B cell (primary cell): ENCODE measurements at regions of chr3 and their contacts with region 1.

Region 1: DNA sequence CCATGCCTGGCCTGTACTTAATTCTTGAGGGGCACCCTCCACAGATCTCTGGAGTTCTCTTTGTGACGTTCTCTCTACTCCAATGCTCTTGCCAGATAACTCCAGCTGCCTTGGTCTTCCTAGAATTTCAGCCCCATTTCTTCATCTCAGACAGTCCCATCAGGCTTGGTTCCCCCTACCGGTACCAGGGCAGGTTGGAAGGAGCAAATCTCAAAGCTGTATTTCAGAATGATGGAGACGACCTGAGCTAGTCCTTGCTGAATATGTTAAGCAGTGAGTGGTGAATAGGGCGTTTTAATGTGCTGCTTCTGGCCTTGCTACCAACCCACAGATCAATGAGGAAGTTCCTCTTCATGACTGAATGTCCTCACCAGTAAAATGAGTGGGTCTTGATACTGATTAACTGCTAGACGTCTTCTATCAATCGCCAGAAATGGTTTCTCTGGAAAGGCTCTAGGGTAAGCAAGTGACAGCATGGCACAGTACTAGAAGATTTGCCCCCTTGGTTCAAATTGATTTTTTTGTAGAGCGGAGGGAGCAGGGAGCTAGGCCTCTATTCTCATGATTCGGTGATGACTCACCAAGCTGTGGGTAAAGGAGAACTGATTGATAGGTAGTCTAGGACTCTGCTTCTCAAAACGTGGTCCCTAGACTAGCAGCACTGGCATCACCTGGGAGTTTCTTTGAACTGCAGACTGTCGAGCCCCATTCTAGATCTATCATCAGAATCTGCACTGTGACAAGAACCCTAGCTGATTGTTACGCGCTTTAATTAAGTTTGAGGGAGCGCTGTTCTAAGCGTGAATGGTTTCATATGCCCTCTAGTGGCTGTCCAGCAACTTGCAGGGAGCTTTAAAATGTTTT is 67.8 kb downstream of the UBP1 start:
- DNase-seq: peak; percentile 68
- ATAC-seq: peak; percentile 49
- H3K4me3 ChIP-seq: no peak overlapping the region
- H3K4me3 Mint-ChIP-seq: no peak overlapping the region
- H3K27ac ChIP-seq: no peak overlapping the region
- H3K27ac Mint-ChIP-seq: no peak overlapping the region
- H3K4me1 ChIP-seq: peaks cover 4 to 6% of the 10 kb centered on the region in 2 donors
- H3K4me1 Mint-ChIP-seq: peaks cover 3% of the 10 kb centered on the region
- H3K27me3 ChIP-seq: peaks cover 0 to 5% (median 1%) of the 10 kb centered on the region in 4 experiments
- H3K27me3 Mint-ChIP-seq: peaks cover 20% of the 10 kb centered on the region
- CTCF ChIP-seq: peak; percentile 93

Region 2: GRCh38 chr3:32401556-32402081 is 970.8 kb before region 1 on chr3:
- CTCF ChIA-PET with region 1: no interaction called
- POLR2A ChIA-PET with region 1: no interaction called
- intact Hi-C with region 1: no loop called
- DNase-seq: peak; percentile 80
- ATAC-seq: peak; percentile 70
- H3K4me3 ChIP-seq: peak overlapping the region; percentile 33 to 75 (median 55)
- H3K4me3 Mint-ChIP-seq: peak overlapping the region; percentile 88
- H3K27ac ChIP-seq: peak overlapping the region; percentile 88 to 94
- H3K27ac Mint-ChIP-seq: peak overlapping the region; percentile 96
- H3K4me1 ChIP-seq: peaks cover 41 to 58% of the 10 kb centered on the region in 2 donors
- H3K4me1 Mint-ChIP-seq: peaks cover 76% of the 10 kb centered on the region
- H3K27me3 ChIP-seq: no peaks in the 10 kb centered on the region
- H3K27me3 Mint-ChIP-seq: no peaks in the 10 kb centered on the region
- CTCF ChIP-seq: no peak

Region 3: GRCh38 chr3:32947789-32948238 is 424.6 kb before region 1 on chr3:
- CTCF ChIA-PET with region 1: interaction called, 85 read pairs
- POLR2A ChIA-PET with region 1: no interaction called
- intact Hi-C with region 1: no loop called
- DNase-seq: peak; percentile 88
- ATAC-seq: peak; percentile 83
- H3K4me3 ChIP-seq: no peak overlapping the region
- H3K4me3 Mint-ChIP-seq: no peak overlapping the region
- H3K27ac ChIP-seq: no peak overlapping the region
- H3K27ac Mint-ChIP-seq: no peak overlapping the region
- H3K4me1 ChIP-seq: peaks cover 0 to 18% of the 10 kb centered on the region in 2 donors
- H3K4me1 Mint-ChIP-seq: peaks cover 13% of the 10 kb centered on the region
- H3K27me3 ChIP-seq: no peaks in the 10 kb centered on the region
- H3K27me3 Mint-ChIP-seq: no peaks in the 10 kb centered on the region
- CTCF ChIP-seq: peak; percentile 87

Region 4: DNA sequence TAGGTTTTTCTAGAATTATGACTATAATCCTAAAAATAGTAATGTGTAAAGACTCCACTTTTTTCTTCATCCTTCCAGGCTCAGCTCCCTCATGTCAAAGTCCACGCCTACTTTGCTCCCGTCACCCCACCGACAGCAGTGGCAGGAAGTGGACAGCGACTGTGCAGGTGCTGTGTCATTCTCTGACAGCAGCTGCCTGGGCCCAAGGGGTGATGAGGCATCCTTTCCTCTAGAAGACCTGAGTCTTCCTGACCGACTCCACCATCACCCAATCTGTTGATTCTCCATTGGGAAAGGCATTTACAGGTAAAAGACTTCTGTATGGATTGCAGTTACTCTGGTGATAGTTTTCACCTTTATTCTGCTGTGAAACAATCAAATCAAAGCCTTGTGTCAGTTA is 13.0 kb after region 1 on chr3:
- CTCF ChIA-PET with region 1: interaction called, 22 read pairs
- POLR2A ChIA-PET with region 1: no interaction called
- intact Hi-C with region 1: no loop called
- DNase-seq: no peak
- ATAC-seq: no peak
- H3K4me3 ChIP-seq: no peak overlapping the region
- H3K4me3 Mint-ChIP-seq: no peak overlapping the region
- H3K27ac ChIP-seq: no peak overlapping the region
- H3K27ac Mint-ChIP-seq: no peak overlapping the region
- H3K4me1 ChIP-seq: no peaks in the 10 kb centered on the region
- H3K4me1 Mint-ChIP-seq: no peaks in the 10 kb centered on the region
- H3K27me3 ChIP-seq: no peaks in the 10 kb centered on the region
- H3K27me3 Mint-ChIP-seq: no peaks in the 10 kb centered on the region
- CTCF ChIP-seq: no peak

Region 5: DNA sequence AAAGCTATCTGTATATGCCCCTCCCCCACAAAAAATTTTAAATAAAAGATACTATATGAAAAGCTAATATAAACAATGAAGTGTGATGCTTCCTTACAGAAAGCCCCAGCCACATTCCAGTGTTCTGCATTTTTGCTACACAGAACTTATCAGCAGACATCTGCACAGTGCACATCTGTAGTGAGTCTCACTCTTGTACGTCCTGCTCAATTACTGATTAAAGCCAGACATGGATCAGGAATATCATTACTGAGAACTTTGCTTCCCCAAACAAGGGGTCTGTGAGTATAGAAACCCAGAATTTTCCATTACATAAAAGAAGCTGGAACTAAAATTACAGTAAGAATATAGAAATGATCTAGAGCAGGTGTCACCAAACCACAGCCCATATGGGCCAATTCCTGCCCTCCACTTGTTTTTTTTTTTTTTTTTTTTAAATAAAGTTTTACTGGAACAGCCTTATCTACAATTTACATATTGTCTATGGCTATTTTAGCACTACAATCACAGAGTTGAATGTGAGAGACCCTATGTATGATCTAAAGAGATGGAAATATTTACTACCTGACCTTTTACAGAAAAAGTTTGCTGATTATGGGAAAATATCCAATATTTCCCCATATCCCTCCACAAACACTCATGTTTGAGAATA is 22.1 kb after region 1 on chr3:
- CTCF ChIA-PET with region 1: interaction called, 14 read pairs
- POLR2A ChIA-PET with region 1: no interaction called
- intact Hi-C with region 1: no loop called
- DNase-seq: no peak
- ATAC-seq: no peak
- H3K4me3 ChIP-seq: no peak overlapping the region
- H3K4me3 Mint-ChIP-seq: no peak overlapping the region
- H3K27ac ChIP-seq: no peak overlapping the region
- H3K27ac Mint-ChIP-seq: no peak overlapping the region
- H3K4me1 ChIP-seq: no peaks in the 10 kb centered on the region
- H3K4me1 Mint-ChIP-seq: no peaks in the 10 kb centered on the region
- H3K27me3 ChIP-seq: no peaks in the 10 kb centered on the region
- H3K27me3 Mint-ChIP-seq: no peaks in the 10 kb centered on the region
- CTCF ChIP-seq: no peak